GM13976 (cell line): ENCODE measurements at regions of chr16 and their contacts with region 1.

Region 1: DNA sequence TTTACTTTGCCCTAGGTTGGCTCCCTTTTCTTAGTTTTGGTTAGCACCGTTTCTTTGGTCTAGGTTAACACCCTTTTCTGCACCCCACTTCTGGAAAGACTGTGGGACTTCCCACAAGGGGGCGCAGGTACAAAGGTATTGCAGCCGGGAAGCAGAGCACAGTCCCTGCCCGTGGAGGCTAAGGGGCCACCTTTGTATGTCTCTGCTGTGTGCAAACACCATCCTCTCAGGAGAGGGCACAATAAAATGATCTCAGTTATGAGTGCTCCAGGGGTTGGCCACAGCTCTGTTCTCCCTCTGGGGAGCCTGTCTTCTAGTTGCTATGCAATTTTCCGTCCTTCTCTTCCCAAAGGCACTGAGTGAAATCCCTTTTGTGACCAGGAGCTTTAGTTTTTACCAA is 28.4 kb upstream of the TMC5 start:
- DNase-seq: peak; percentile 55
- CTCF ChIP-seq: peak; percentile 66

Region 2: GRCh38 chr16:19502395-19503131 is 113.3 kb after region 1 on chr16:
- in situ Hi-C with region 1: loop called (anchors 10 kb)
- DNase-seq: peak; percentile 56
- CTCF ChIP-seq: peak; percentile 46